CD4-positive, alpha-beta T cell (primary cell): ENCODE measurements at regions of chr7 and their contacts with region 1.

Region 1: DNA sequence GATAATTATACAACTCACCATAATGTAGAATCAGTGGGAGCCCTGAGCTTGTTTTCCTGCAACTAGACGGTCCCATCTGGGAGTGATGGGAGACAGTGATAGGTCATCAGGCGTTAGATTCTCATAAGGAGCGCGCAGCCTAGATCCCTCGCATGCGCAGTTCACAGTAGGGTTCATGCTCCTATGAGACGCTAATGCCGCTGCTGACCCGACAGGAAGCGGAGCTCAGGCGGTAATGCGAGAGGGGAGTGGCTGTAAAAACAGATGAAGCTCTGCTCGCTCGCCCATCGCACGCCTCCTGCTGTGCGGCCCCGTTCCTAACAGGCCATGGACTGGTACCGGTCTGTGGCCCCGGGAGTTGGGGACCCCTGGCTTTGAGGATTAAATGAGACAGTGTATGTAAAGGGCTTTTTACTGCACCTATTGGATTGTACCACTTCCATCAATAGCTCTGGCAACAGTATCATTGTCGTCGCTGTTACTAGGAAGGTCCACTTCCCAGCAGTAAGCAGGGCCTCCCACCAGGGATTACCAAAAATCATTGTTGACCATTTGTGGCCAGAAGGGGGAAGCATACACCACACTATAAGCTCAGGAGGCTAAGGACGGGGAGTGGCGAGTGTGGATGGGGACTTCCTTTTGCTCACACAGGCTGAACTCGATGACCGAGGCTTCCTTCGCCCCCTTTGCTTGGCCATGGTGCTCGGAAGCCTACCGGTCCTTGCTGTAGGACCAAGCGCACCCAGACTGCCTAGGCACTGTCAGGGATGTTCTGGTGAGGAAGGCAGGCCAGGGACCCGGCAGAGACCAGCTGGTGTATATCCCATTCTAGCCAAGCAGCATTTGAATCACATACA is 26.4 kb downstream of the AKR1B1 start:
- DNase-seq: peak; percentile 42 to 88 (median 59)
- ATAC-seq: peak; percentile 92
- H3K4me3 ChIP-seq: peak overlapping the region; percentile 46
- H3K4me3 Mint-ChIP-seq: peak overlapping the region; percentile 82
- H3K27ac ChIP-seq: peak overlapping the region in 1 of 2 donors; percentile 25
- H3K27ac Mint-ChIP-seq: peak overlapping the region; percentile 85
- H3K4me1 ChIP-seq: peaks cover 17% of the 10 kb centered on the region
- H3K4me1 Mint-ChIP-seq: peaks cover 18% of the 10 kb centered on the region
- H3K27me3 ChIP-seq: no peaks in the 10 kb centered on the region
- H3K27me3 Mint-ChIP-seq: no peaks in the 10 kb centered on the region
- CTCF ChIP-seq: peak; percentile 75

Region 2: DNA sequence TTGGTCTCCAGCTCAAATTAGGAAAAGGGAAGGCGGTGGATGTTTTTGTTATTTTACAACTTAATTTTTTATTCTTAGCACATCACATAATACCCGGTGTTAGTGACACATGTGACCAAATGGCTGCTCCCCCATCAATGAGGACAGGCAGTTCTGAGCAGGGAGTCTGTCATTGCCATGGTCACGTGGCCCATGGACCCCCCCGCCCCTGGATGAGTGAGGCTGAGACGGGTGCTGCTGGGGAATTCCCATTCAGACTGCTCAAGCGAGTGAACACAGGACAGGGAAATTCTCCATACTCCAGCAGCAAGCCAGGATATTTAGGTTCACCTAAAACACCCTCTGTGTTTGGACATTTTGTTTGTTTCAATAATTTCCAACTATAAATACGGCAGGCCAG is 81.1 kb before region 1 on chr7:
- CTCF ChIA-PET with region 1: no interaction called
- POLR2A ChIA-PET with region 1: no interaction called
- intact Hi-C with region 1: no loop called
- DNase-seq: no peak
- ATAC-seq: no peak
- H3K4me3 ChIP-seq: no peak overlapping the region
- H3K4me3 Mint-ChIP-seq: no peak overlapping the region
- H3K27ac ChIP-seq: no peak overlapping the region
- H3K27ac Mint-ChIP-seq: no peak overlapping the region
- H3K4me1 ChIP-seq: no peaks in the 10 kb centered on the region
- H3K4me1 Mint-ChIP-seq: no peaks in the 10 kb centered on the region
- H3K27me3 ChIP-seq: peaks cover 0 to 2% of the 10 kb centered on the region in 2 experiments
- H3K27me3 Mint-ChIP-seq: peaks cover 34% of the 10 kb centered on the region
- CTCF ChIP-seq: no peak

Region 3: GRCh38 chr7:134394046-134394445 is 38.5 kb before region 1 on chr7:
- CTCF ChIA-PET with region 1: no interaction called
- POLR2A ChIA-PET with region 1: no interaction called
- intact Hi-C with region 1: no loop called
- DNase-seq: no peak
- ATAC-seq: no peak
- H3K4me3 ChIP-seq: no peak overlapping the region
- H3K4me3 Mint-ChIP-seq: no peak overlapping the region
- H3K27ac ChIP-seq: no peak overlapping the region
- H3K27ac Mint-ChIP-seq: no peak overlapping the region
- H3K4me1 ChIP-seq: no peaks in the 10 kb centered on the region
- H3K4me1 Mint-ChIP-seq: no peaks in the 10 kb centered on the region
- H3K27me3 ChIP-seq: peaks cover 0 to 6% of the 10 kb centered on the region in 2 experiments
- H3K27me3 Mint-ChIP-seq: peaks cover 24% of the 10 kb centered on the region
- CTCF ChIP-seq: no peak

Region 4: GRCh38 chr7:134514663-134515062 is 82.1 kb after region 1 on chr7:
- CTCF ChIA-PET with region 1: interaction called, 10 read pairs
- POLR2A ChIA-PET with region 1: interaction called, 8 read pairs
- intact Hi-C with region 1: loop called (anchors 1 kb)
- DNase-seq: peak in 5 of 14 experiments; percentile 7 to 78 (median 65)
- ATAC-seq: peak; percentile 63
- H3K4me3 ChIP-seq: no peak overlapping the region
- H3K4me3 Mint-ChIP-seq: no peak overlapping the region
- H3K27ac ChIP-seq: no peak overlapping the region
- H3K27ac Mint-ChIP-seq: no peak overlapping the region
- H3K4me1 ChIP-seq: no peaks in the 10 kb centered on the region
- H3K4me1 Mint-ChIP-seq: no peaks in the 10 kb centered on the region
- H3K27me3 ChIP-seq: peaks cover 6 to 12% of the 10 kb centered on the region in 2 experiments
- H3K27me3 Mint-ChIP-seq: peaks cover 28% of the 10 kb centered on the region
- CTCF ChIP-seq: peak; percentile 95

Region 5: DNA sequence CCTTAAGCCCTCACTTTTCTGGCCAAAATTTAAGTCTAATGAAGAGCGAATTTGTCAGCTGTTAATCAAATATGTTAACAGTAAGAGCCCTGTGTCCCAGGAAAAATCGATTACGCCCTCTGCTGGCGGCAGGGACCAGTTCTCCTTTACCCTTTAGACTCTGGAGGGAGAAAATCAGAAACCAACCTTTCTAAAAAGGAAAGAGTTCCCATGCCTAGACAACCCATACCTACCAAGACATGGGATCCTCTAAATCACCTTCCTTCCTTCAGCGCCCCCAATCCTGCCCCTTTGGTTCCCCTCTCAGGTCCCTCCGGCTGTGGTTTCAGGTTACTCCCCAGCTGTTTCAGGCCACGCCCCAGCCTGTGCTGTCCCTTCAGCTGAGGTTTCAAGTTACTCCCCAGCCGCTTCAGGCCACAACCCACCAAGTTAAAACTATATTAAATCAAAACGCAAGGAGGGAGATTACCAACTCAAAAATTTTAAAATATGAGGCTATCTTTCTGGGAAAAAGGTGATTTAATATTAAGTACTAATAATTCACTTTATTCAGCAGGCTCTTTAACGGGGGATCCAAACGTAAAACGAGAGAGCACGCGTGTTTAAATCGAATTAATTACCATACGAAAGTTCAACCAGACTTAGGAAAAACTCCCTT is 115.0 kb after region 1 on chr7:
- CTCF ChIA-PET with region 1: interaction called, 27 read pairs
- POLR2A ChIA-PET with region 1: interaction called, 8 read pairs
- intact Hi-C with region 1: loop called (anchors 1 kb)
- DNase-seq: peak; percentile 49 to 80 (median 62)
- ATAC-seq: peak; percentile 61
- H3K4me3 ChIP-seq: no peak overlapping the region
- H3K4me3 Mint-ChIP-seq: no peak overlapping the region
- H3K27ac ChIP-seq: no peak overlapping the region
- H3K27ac Mint-ChIP-seq: no peak overlapping the region
- H3K4me1 ChIP-seq: peaks cover 3% of the 10 kb centered on the region
- H3K4me1 Mint-ChIP-seq: no peaks in the 10 kb centered on the region
- H3K27me3 ChIP-seq: peaks cover 0 to 4% of the 10 kb centered on the region in 2 experiments
- H3K27me3 Mint-ChIP-seq: peaks cover 31% of the 10 kb centered on the region
- CTCF ChIP-seq: peak; percentile 86

Region 6: DNA sequence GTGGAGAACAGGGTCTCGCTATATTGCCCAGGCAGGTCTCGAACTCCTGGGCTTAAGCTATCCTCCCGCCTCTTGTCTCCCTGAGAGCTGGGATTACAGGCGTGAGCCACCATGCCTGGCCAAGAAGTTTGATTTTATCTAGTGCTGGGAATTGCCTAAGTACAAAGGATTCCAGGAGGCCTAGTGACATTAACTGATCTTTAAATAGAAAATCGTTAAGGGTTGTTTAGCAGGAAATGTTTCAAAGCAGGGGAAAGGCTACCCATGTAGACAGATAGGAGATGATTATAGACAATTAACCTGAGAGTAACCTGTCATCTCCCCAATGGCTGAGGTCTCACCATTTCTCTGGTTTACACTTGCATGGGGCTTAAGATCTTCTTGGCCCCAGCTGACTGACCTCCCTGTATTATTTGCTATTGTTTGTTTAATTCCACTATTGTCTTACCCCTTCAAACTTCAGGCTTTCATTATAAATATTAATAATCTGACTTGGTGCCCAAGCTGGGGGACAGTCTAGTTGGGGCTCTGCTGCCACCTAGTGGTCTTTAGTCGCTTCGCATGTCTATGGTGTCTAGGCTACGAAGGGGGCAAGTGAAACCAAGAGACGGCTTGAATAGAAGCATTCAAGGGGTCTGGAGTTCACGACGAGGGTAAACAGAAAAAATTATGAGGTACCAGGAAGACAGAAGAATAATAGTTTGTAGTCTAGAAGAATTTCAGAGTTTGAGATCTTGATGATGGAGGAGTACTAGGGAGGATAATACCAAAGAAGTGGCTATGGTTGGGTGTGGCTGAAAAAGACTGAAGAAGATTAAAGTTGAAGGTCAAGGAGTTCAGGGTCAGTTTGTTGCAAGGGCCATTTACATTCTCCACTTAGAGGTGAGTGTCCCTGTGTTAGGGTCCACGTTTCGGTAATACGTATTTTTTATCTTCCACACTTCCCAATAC is 173.7 kb after region 1 on chr7:
- CTCF ChIA-PET with region 1: interaction called, 8 read pairs
- POLR2A ChIA-PET with region 1: no interaction called
- intact Hi-C with region 1: loop called (anchors 1 to 2 kb)
- DNase-seq: peak; percentile 35 to 79 (median 48)
- ATAC-seq: peak; percentile 86
- H3K4me3 ChIP-seq: no peak overlapping the region
- H3K4me3 Mint-ChIP-seq: no peak overlapping the region
- H3K27ac ChIP-seq: no peak overlapping the region
- H3K27ac Mint-ChIP-seq: no peak overlapping the region
- H3K4me1 ChIP-seq: no peaks in the 10 kb centered on the region
- H3K4me1 Mint-ChIP-seq: peaks cover 5% of the 10 kb centered on the region
- H3K27me3 ChIP-seq: peaks cover 0 to 12% of the 10 kb centered on the region in 2 experiments
- H3K27me3 Mint-ChIP-seq: peaks cover 62% of the 10 kb centered on the region
- CTCF ChIP-seq: peak; percentile 92

Region 7: GRCh38 chr7:134831862-134832261 is 399.3 kb after region 1 on chr7:
- CTCF ChIA-PET with region 1: no interaction called
- POLR2A ChIA-PET with region 1: no interaction called
- intact Hi-C with region 1: no loop called
- DNase-seq: peak in 2 of 14 experiments; percentile 9 to 11
- ATAC-seq: no peak
- H3K4me3 ChIP-seq: no peak overlapping the region
- H3K4me3 Mint-ChIP-seq: no peak overlapping the region
- H3K27ac ChIP-seq: no peak overlapping the region
- H3K27ac Mint-ChIP-seq: no peak overlapping the region
- H3K4me1 ChIP-seq: no peaks in the 10 kb centered on the region
- H3K4me1 Mint-ChIP-seq: no peaks in the 10 kb centered on the region
- H3K27me3 ChIP-seq: no peaks in the 10 kb centered on the region
- H3K27me3 Mint-ChIP-seq: no peaks in the 10 kb centered on the region
- CTCF ChIP-seq: no peak